H1 (cell line): ENCODE measurements at regions of chr11 and their contacts with region 1.

Region 1: DNA sequence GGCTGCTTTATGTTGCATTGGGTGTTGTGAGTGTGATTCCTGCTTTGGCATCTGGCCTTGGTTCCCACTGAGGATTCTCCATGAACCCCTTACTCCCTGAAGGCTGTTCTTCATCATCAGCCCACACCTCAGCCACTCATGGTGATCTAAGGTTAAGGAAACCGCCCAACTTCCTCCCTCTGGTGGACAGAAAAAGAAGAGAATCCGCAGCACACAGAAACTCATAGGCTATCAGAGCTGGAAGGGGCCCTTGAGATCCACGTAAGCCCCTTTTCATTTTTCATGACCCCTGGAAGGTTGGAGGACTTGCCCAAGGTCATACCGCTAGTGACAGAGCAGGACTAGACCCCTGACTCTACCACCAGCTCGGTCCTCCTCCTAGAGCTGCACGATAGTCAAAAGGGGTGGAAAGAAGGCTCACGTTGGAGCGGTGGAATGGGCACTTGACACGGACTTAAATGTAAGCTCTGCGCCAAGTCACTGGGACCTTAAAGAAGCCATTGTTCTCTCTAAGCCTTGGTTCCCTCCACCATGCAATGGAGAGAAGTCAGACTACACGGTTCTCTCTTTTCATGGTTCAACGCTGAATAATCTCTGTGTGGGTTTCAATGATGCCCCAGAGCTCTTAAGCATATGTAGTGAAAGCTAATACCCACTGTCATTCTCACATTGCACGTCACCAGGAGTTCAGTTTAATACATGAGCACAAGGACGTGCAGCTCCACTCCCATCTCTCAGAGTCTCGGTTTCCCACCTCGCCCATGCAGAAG is 83.6 kb upstream of the CRTAM start:
- DNase-seq: peak; percentile 17 to 52
- H3K4me3 ChIP-seq: no peak overlapping the region
- H3K27ac ChIP-seq: no peak overlapping the region
- H3K4me1 ChIP-seq: no peaks in the 10 kb centered on the region
- H3K27me3 ChIP-seq: no peaks in the 10 kb centered on the region
- CTCF ChIP-seq: peak; percentile 28 to 71 (median 66)
- EP300 ChIP-seq: no peak
- POLR2A ChIP-seq: no peak
- RAD21 ChIP-seq: peak; percentile 56 to 72

Region 2: GRCh38 chr11:122578168-122578825 is 176.4 kb before region 1 on chr11:
- CTCF ChIA-PET with region 1: interaction called, 10 read pairs
- POLR2A ChIA-PET with region 1: no interaction called
- DNase-seq: no peak
- H3K4me3 ChIP-seq: no peak overlapping the region
- H3K27ac ChIP-seq: no peak overlapping the region
- H3K4me1 ChIP-seq: peaks cover 0 to 3% (median 0%) of the 10 kb centered on the region in 4 experiments; a peak in 2 of 7 replicates
- H3K27me3 ChIP-seq: no peaks in the 10 kb centered on the region
- CTCF ChIP-seq: peak in 2 of 3 experiments; percentile 17 to 27; a peak in 2 of 4 replicates
- EP300 ChIP-seq: no peak
- POLR2A ChIP-seq: no peak
- RAD21 ChIP-seq: peak; percentile 34 to 44

Region 3: DNA sequence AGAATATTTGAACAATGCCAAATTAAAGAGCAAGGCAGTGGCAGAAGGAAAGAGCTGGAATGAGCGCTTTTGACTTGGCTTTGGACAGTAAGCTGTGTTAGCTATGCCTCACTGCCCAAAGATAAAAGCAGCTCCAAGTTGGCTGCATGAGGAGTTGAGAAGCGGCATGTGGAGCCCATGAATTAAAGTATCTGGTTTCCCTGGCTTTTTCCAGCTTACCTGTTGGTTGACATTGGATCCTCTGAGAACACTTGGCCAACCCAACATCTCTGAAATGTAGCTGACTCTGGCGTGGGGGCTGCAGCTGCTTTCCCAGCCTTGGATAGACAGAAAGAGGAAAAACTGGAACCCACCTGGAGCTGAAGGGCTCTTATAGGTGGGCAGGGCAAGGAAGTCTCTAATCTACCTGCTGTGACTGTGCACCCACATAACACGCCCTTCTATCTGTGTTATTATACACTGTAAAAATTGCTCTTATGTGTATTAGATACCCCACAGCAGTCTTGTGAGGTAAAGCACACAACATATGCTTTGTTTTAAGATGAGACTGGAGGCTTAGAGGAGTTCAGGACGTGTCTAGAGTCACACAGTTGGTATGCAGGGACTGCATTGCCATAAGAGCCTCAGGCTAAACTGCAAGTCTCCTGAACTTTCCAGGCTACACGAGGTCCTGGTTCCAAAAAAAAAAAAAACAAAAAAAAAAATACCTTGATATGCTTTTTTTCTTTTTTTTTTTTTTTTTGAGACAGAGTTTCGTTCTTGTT is 93.4 kb before region 1 on chr11:
- CTCF ChIA-PET with region 1: interaction called, 47 read pairs
- POLR2A ChIA-PET with region 1: no interaction called
- DNase-seq: no peak
- H3K4me3 ChIP-seq: no peak overlapping the region
- H3K27ac ChIP-seq: no peak overlapping the region
- H3K4me1 ChIP-seq: peaks cover 0 to 2% (median 0%) of the 10 kb centered on the region in 4 experiments; a peak in 3 of 7 replicates
- H3K27me3 ChIP-seq: peaks cover 0 to 5% (median 1%) of the 10 kb centered on the region in 4 experiments; a peak in 3 of 7 replicates
- CTCF ChIP-seq: no peak
- EP300 ChIP-seq: no peak
- POLR2A ChIP-seq: no peak
- RAD21 ChIP-seq: no peak

Region 4: GRCh38 chr11:122697636-122698167 is 57.0 kb before region 1 on chr11:
- CTCF ChIA-PET with region 1: interaction called, 13 read pairs
- POLR2A ChIA-PET with region 1: no interaction called
- DNase-seq: no peak
- H3K4me3 ChIP-seq: no peak overlapping the region
- H3K27ac ChIP-seq: no peak overlapping the region
- H3K4me1 ChIP-seq: peaks cover 0 to under 1% (median under 1%) of the 10 kb centered on the region in 4 experiments; a peak in 1 of 7 replicates
- H3K27me3 ChIP-seq: no peaks in the 10 kb centered on the region
- CTCF ChIP-seq: no peak
- EP300 ChIP-seq: no peak
- POLR2A ChIP-seq: no peak
- RAD21 ChIP-seq: no peak

Region 5: GRCh38 chr11:122721964-122722266 is 32.8 kb before region 1 on chr11:
- CTCF ChIA-PET with region 1: interaction called, 12 read pairs
- POLR2A ChIA-PET with region 1: no interaction called
- DNase-seq: no peak
- H3K4me3 ChIP-seq: no peak overlapping the region
- H3K27ac ChIP-seq: no peak overlapping the region
- H3K4me1 ChIP-seq: peaks cover 0 to 7% (median 3%) of the 10 kb centered on the region in 4 experiments; a peak in 4 of 7 replicates
- H3K27me3 ChIP-seq: no peaks in the 10 kb centered on the region
- CTCF ChIP-seq: no peak
- EP300 ChIP-seq: no peak
- POLR2A ChIP-seq: no peak
- RAD21 ChIP-seq: no peak

Region 6: GRCh38 chr11:122765487-122766131 is 10.9 kb after region 1 on chr11:
- CTCF ChIA-PET with region 1: interaction called, 44 read pairs
- POLR2A ChIA-PET with region 1: no interaction called
- DNase-seq: no peak
- H3K4me3 ChIP-seq: no peak overlapping the region
- H3K27ac ChIP-seq: no peak overlapping the region
- H3K4me1 ChIP-seq: no peaks in the 10 kb centered on the region
- H3K27me3 ChIP-seq: no peaks in the 10 kb centered on the region
- CTCF ChIP-seq: no peak
- EP300 ChIP-seq: no peak
- POLR2A ChIP-seq: no peak
- RAD21 ChIP-seq: no peak

Region 7: GRCh38 chr11:122781378-122782195 is 26.8 kb after region 1 on chr11:
- CTCF ChIA-PET with region 1: interaction called, 356 read pairs
- POLR2A ChIA-PET with region 1: no interaction called
- DNase-seq: peak; percentile 77 to 95
- H3K4me3 ChIP-seq: no peak overlapping the region
- H3K27ac ChIP-seq: no peak overlapping the region
- H3K4me1 ChIP-seq: peaks cover 0 to 2% (median 0%) of the 10 kb centered on the region in 4 experiments; a peak in 4 of 7 replicates
- H3K27me3 ChIP-seq: no peaks in the 10 kb centered on the region
- CTCF ChIP-seq: peak; percentile 81 to 95 (median 93)
- EP300 ChIP-seq: no peak
- POLR2A ChIP-seq: no peak
- RAD21 ChIP-seq: peak; percentile 89 to 94

Region 8: GRCh38 chr11:122882857-122883645 is 128.3 kb after region 1 on chr11:
- CTCF ChIA-PET with region 1: no interaction called
- POLR2A ChIA-PET with region 1: no interaction called
- DNase-seq: peak in 1 of 2 experiments; percentile 78
- H3K4me3 ChIP-seq: peak overlapping the region; percentile 66 to 81 (median 68)
- H3K27ac ChIP-seq: no peak overlapping the region
- H3K4me1 ChIP-seq: peaks cover 0 to 11% (median 5%) of the 10 kb centered on the region in 4 experiments; a peak in 5 of 7 replicates
- H3K27me3 ChIP-seq: peaks cover 0 to 13% (median 10%) of the 10 kb centered on the region in 4 experiments; a peak in 5 of 7 replicates
- CTCF ChIP-seq: no peak
- EP300 ChIP-seq: no peak
- POLR2A ChIP-seq: peak in 1 of 2 experiments; percentile 28; a peak in 1 of 3 replicates
- RAD21 ChIP-seq: no peak